ENCODE measurements at regions of chr17 and their contacts with region 1.

Region 1: DNA sequence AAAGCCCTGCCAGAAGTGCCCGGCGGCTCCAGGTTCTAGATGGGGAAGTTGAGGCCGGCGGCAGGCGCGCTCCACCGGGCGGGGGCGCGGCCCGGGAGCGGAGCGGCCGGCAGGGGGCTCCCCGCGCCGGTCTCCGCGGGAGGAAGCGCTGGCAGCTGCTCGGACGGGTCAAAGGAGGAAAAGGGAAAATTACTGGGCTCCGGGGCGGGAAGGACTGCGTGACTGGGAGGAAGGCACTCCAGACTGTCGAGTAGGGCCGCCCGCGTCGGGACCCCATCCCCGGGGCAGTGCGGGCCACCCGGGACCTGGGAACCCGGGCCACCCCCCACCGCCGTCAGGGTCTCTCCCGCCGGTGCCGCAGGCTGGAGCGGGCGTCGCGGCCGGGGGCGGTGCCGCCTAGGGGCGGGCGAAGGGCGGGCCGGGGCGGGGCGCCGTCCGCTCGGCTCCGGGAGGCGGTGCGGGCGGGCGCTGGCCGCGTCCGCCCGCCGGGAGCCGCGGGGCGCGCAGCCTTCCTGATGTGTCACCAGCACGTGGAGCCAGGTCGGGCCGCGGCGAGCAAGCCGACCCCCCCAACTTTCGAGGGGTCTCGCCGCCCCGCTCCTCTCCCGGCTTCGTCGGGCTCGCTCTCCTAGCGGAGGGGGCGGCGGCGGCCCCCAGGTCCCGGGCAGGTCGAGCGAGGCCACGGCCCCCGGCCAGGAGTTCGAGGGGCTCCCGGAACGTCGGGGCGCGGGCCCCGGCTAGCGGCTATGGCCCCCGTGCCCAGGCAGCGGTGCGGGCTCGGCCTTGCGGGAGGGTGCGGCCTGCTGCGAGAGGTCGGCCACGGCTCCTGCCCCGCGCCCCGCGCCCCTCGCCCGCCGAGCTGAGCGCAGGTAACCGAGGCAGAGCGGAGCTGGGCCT is 167.5 kb downstream of the RAB11FIP4 start:
- DNase-seq: peak; percentile 80 to 88 (median 87)
- H3K4me3 ChIP-seq: peak overlapping the region; percentile 54
- H3K27ac ChIP-seq: peak overlapping the region; percentile 77 to 81
- H3K4me1 ChIP-seq: peaks cover 11% of the 10 kb centered on the region
- H3K27me3 ChIP-seq: no peaks in the 10 kb centered on the region
- CTCF ChIP-seq: peak; percentile 76 to 94 (median 94)
- EP300 ChIP-seq: no peak
- POLR2A ChIP-seq: peak; percentile 55

Region 2: GRCh38 chr17:31609996-31610910 is 51.3 kb after region 1 on chr17:
- intact Hi-C with region 1: no loop called
- DNase-seq: no peak
- H3K4me3 ChIP-seq: no peak overlapping the region
- H3K27ac ChIP-seq: no peak overlapping the region
- H3K4me1 ChIP-seq: no peaks in the 10 kb centered on the region
- H3K27me3 ChIP-seq: no peaks in the 10 kb centered on the region
- CTCF ChIP-seq: no peak
- EP300 ChIP-seq: no peak
- POLR2A ChIP-seq: no peak

Region 3: DNA sequence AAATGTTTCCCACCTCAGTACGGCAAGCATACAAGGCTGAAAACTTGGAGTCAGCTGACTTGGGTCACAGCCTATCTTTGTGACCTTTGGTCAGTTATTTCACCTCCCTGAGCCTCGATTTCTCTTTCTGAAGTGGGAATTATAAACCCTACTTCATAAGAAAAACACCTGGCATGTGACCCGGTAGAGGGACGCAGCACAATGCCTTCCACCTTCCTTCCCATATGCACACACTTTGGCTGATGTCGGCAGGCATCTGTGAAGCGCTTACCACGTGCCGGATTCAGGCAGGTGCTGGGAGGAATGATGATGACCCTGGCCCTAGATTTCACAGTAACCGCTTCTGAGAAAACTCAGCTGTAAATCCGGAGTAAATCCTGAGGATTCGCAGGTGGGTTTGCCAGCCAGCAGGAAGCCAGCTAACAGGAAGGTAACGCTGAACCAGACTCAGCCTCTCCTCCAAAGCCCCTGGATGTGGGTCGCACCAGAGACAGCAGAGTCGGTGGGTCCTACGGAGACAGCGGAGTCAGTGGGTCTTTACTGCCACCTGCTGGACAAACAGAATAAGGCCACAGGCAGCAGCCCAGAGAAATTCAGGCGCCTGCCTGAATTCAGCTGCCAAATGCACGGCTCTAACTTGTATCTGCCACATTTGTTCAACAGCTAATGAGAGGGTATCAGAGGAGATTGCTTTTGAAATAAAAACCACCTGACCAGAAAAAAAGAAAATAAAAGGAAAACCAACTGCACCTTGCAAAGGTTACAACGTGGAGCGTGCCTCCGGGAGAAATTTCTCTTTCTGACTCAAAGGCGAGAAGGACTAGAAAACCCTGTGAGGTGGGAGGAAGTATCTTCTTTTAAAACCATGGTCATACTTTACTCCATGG is 283.4 kb after region 1 on chr17:
- intact Hi-C with region 1: loop called (anchors 2 to 5 kb)
- DNase-seq: peak; percentile 73 to 78 (median 78)
- H3K4me3 ChIP-seq: peak overlapping the region; percentile 24
- H3K27ac ChIP-seq: peak overlapping the region in 1 of 2 donors; percentile 55
- H3K4me1 ChIP-seq: peaks cover 8% of the 10 kb centered on the region
- H3K27me3 ChIP-seq: no peaks in the 10 kb centered on the region
- CTCF ChIP-seq: peak; percentile 92 to 95 (median 94)
- EP300 ChIP-seq: no peak
- POLR2A ChIP-seq: no peak

Measured in ovary (tissue), 10 donors.